ENCODE measurements at regions of chr10 and their contacts with region 1.

Region 1: GRCh38 chr10:122298598-122299301 is 27.7 kb downstream of the BTBD16 start:
- DNase-seq: peak; percentile 75
- ATAC-seq: peak; percentile 94

Region 2: GRCh38 chr10:122154545-122155366 is 144.0 kb before region 1 on chr10:
- intact Hi-C with region 1: no loop called
- DNase-seq: no peak
- ATAC-seq: peak; percentile 19

Region 3: GRCh38 chr10:122213766-122214165 is 85.0 kb before region 1 on chr10:
- intact Hi-C with region 1: no loop called
- DNase-seq: no peak
- ATAC-seq: peak; percentile 31

Region 4: GRCh38 chr10:122342293-122343134 is 43.8 kb after region 1 on chr10:
- intact Hi-C with region 1: loop called (anchors 5 kb)
- DNase-seq: no peak
- ATAC-seq: peak; percentile 52

Region 5: GRCh38 chr10:122435212-122435827 is 136.6 kb after region 1 on chr10:
- intact Hi-C with region 1: loop called (anchors 2 kb)
- DNase-seq: no peak
- ATAC-seq: peak; percentile 63

Region 6: GRCh38 chr10:122557516-122557915 is 258.8 kb after region 1 on chr10:
- intact Hi-C with region 1: loop called (anchors 5 kb)
- DNase-seq: no peak
- ATAC-seq: no peak

Region 7: GRCh38 chr10:122565728-122566206 is 267.0 kb after region 1 on chr10:
- intact Hi-C with region 1: loop called (anchors 5 kb)
- DNase-seq: peak; percentile 86
- ATAC-seq: peak; percentile 75